GM12878 (cell line): ENCODE measurements at regions of chr19 and their contacts with region 1.

Region 1: DNA sequence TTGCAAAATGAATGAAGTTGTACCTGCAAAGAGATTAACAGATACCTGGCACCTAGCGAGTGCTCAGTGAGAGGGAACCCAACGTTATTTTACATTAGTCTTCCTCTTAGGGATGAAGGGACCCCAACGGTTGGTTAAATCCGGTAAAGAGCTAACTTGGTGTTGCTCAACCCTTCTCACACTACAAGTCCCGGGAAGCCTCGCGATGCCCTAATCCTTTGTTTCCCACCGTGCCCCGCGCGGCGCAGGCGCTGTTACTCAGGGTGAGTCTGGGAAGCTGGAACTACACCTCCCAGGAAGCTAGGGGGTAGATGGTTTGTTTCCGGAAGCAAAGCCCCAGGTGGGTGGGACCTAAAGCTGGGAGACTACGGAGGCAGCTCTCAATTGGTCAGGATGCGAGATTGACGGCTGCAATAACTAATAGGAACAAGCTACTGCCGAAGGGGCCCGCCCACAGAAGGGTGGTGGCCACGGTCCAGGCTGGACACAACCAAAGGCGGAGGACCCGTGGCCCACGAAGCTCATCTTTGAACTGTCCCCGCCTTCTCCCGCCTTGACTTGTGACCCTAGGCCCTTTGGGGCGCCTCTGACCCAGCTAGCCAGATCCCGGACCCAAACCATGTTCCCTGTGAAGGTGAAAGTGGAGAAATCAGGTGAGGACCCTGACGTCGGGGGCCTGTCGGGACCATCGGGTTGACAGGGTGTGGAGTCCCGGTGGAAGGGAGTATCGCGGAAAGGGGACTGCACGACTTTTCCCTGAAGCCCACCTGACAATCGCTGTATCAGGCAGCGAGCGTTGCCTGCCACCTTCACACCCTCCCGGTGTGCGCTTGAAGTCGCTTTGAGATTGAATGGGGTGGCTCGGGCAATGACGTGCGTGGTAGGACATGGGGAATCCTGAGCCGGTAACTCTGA is at the start of gene LIN37:
- DNase-seq: peak; percentile 99
- ATAC-seq: peak; percentile 85
- H3K4me3 ChIP-seq: peak within 1 kb of the TSS; percentile 81
- H3K27ac ChIP-seq: peak within 1 kb of the TSS; percentile 59
- H3K4me1 ChIP-seq: peaks cover 19% of the 10 kb centered on the region
- H3K27me3 ChIP-seq: no peaks in the 10 kb centered on the region
- CTCF ChIP-seq: no peak
- EP300 ChIP-seq: no peak
- POLR2A ChIP-seq: peak; percentile 55
- RAD21 ChIP-seq: no peak
- polyA plus RNA-seq, gene LIN37: 0.69 to 3.3 TPM

Region 2: DNA sequence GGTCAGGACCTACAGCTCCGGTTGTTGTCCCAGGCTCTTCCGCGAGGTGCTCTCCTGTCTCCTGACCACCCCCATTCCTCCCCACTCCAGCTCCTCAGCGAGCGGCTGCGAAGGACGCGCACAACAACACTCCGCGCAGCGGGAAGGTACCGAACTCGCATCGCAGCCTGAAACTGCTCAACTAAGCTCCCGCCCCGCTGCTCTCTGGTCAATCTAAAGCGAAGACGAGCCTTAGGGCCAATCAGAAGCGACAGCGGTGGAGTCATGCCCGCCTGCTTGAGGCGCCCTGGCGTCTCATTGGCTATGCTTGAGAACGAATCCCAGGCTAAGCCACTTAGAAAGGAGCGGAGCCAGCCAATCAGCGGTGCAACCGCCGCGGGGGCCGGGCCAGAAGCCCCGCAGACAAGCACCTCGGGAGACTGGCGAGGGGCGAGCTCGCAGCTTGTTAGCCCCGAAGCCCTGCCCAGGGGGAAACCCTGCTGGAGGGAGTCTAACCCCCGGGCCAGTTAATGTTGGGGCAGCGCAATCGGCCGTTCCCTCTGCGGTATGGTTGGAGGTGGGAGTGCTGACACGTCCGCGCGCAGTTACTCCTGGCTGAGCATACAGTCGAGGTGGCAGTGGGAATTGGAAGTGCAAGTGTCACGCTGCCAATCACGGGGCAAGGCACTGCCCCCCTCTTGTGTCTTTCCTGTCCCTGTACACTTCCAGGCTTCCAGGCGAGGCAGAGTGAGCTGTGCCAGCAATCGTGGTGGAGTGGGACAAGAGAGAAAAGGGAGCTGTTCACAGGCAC is 45.9 kb before region 1 on chr19:
- CTCF ChIA-PET with region 1: interaction called, 10 read pairs
- POLR2A ChIA-PET with region 1: interaction called, 28 read pairs
- RAD21 ChIA-PET with region 1: interaction called, 13 read pairs
- SMC1A ChIA-PET with region 1: interaction called, 4 read pairs
- in situ Hi-C with region 1: no loop called
- intact Hi-C with region 1: no loop called
- DNase-seq: peak; percentile 96
- ATAC-seq: peak; percentile 98
- H3K4me3 ChIP-seq: peak overlapping the region; percentile 80
- H3K27ac ChIP-seq: peak overlapping the region; percentile 90
- H3K4me1 ChIP-seq: peaks cover 8% of the 10 kb centered on the region
- H3K27me3 ChIP-seq: no peaks in the 10 kb centered on the region
- CTCF ChIP-seq: no peak
- EP300 ChIP-seq: no peak
- POLR2A ChIP-seq: peak; percentile 93
- RAD21 ChIP-seq: no peak

Region 3: DNA sequence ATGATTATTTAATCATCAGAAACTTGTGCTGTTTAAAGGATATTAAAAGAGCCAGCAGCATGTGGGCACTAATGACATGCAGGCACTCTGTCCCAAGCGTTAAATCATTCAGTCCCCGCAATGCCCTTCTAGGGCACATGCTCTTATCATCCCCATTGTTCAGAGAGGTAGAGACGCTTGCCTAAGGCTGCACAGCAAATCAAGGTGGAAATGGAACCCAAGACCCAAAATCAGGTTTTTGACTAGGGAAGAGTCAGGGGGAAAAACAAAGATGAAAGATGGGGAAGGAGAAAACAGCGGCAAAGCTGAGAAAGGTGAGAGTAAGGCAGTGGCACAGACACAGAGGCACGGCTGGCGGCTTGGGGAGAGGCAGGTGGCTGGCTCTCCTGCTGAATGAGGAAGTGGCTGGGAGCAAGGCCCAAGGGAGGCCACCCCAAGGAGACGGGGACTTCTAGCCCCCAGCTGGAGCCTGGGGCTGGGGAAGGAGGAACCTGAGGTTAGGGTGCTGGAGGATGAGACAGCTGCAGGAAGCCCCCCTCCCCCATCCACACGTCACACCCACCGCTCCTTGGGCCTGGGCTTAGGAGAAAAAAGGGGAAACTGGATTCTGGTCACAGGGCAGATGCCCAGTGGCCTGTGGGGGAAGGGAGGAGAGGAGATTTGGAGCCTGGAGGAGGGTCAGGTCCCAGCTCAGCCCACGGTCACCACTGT is 160.8 kb after region 1 on chr19:
- CTCF ChIA-PET with region 1: no interaction called
- POLR2A ChIA-PET with region 1: interaction called, 5 read pairs
- RAD21 ChIA-PET with region 1: interaction called, 10 read pairs
- SMC1A ChIA-PET with region 1: interaction called, 3 read pairs
- in situ Hi-C with region 1: no loop called
- intact Hi-C with region 1: no loop called
- DNase-seq: no peak
- ATAC-seq: peak; percentile 78
- H3K4me3 ChIP-seq: no peak overlapping the region
- H3K27ac ChIP-seq: peak overlapping the region; percentile 88
- H3K4me1 ChIP-seq: peaks cover 55% of the 10 kb centered on the region
- H3K27me3 ChIP-seq: no peaks in the 10 kb centered on the region
- CTCF ChIP-seq: no peak
- EP300 ChIP-seq: peak; percentile 64 to 77; a peak in 3 of 4 replicates
- POLR2A ChIP-seq: peak; percentile 39; the same call in 1 of the 2 replicates
- RAD21 ChIP-seq: no peak